T-cell (primary cell): ENCODE measurements at regions of chr9 and their contacts with region 1.

Region 1: GRCh38 chr9:121353241-121354061 is 16.6 kb downstream of the STOM start:
- DNase-seq: peak in 31 of 35 experiments; percentile 12 to 86 (median 45)
- ATAC-seq: peak; percentile 86 to 96 (median 90)
- H3K4me3 ChIP-seq: peak overlapping the region in 1 of 2 donors; percentile 5
- H3K4me3 Mint-ChIP-seq: peak overlapping the region; percentile 34 to 56 (median 44)
- H3K27ac ChIP-seq: peak overlapping the region; percentile 73
- H3K27ac Mint-ChIP-seq: peak overlapping the region; percentile 80 to 87
- H3K4me1 ChIP-seq: peaks cover 0 to 49% of the 10 kb centered on the region in 2 experiments
- H3K4me1 Mint-ChIP-seq: peaks cover 32 to 67% (median 52%) of the 10 kb centered on the region in 3 donors
- H3K27me3 ChIP-seq: no peaks in the 10 kb centered on the region
- H3K27me3 Mint-ChIP-seq: no peaks in the 10 kb centered on the region

Region 2: GRCh38 chr9:121369595-121370265 is 16.3 kb after region 1 on chr9 and contains the start of gene STOM:
- CTCF ChIA-PET with region 1: interaction called in 1 of 2 experiments, 10 read pairs
- POLR2A ChIA-PET with region 1: interaction called in 1 of 2 experiments, 7 read pairs
- DNase-seq: peak in 34 of 35 experiments; percentile 14 to 83 (median 66)
- ATAC-seq: peak; percentile 52 to 57 (median 54)
- H3K4me3 ChIP-seq: peak within 1 kb of the TSS; percentile 84 to 97
- H3K4me3 Mint-ChIP-seq: peak within 1 kb of the TSS; percentile 89 to 91 (median 89)
- H3K27ac ChIP-seq: peak within 1 kb of the TSS; percentile 84
- H3K27ac Mint-ChIP-seq: peak within 1 kb of the TSS; percentile 92 to 96
- H3K4me1 ChIP-seq: peaks cover 6 to 25% of the 10 kb centered on the region in 2 experiments
- H3K4me1 Mint-ChIP-seq: peaks cover 39 to 70% (median 62%) of the 10 kb centered on the region in 3 donors
- H3K27me3 ChIP-seq: no peaks in the 10 kb centered on the region
- H3K27me3 Mint-ChIP-seq: no peaks in the 10 kb centered on the region
- total RNA-seq, gene STOM: 24.2 to 73.9 (median 57.8) TPM

Region 3: DNA sequence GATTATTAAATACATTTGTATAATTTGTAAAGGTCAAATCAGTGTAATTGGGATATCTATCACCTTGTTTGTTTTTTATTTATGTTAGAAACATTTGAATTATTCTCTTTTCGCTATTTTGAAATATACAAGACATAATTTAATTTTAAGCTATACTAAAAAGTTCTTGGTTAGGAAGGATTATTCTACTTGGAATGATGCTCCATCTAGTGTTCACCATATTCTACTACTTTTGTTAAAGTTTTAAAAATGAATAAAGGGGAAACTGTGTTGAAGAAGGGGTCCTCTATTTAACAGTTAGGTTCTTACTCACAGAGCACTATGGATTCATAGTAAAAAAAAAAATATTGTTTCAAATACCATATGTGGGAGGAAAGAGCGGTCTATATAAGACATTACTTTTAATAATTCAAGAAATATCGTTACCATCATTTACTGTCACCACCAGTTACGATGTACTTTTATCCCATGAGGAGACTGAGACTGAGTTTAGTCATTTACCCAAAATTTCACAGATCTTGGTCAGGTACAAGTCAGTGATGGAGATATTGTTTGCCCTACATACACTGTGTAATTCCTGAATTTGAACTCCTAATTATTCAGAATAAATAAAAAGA is 22.9 kb after region 1 on chr9:
- CTCF ChIA-PET with region 1: interaction called in 1 of 2 experiments, 11 read pairs
- POLR2A ChIA-PET with region 1: no interaction called
- DNase-seq: peak in 1 of 35 experiments; percentile 48
- ATAC-seq: no peak
- H3K4me3 ChIP-seq: no peak overlapping the region
- H3K4me3 Mint-ChIP-seq: no peak overlapping the region
- H3K27ac ChIP-seq: no peak overlapping the region
- H3K27ac Mint-ChIP-seq: no peak overlapping the region
- H3K4me1 ChIP-seq: no peaks in the 10 kb centered on the region
- H3K4me1 Mint-ChIP-seq: peaks cover 0 to 22% (median 16%) of the 10 kb centered on the region in 3 donors
- H3K27me3 ChIP-seq: no peaks in the 10 kb centered on the region
- H3K27me3 Mint-ChIP-seq: no peaks in the 10 kb centered on the region